Common myeloid progenitor, CD34-positive (primary cell): ENCODE measurements at regions of chr7 and their contacts with region 1.

Region 1: GRCh38 chr7:139127648-139128047 is 18.1 kb upstream of the ZC3HAV1 start:
- DNase-seq: no peak
- H3K4me3 ChIP-seq: no peak overlapping the region
- H3K27ac ChIP-seq: no peak overlapping the region
- H3K4me1 ChIP-seq: peaks cover 0 to 12% (median 5%) of the 10 kb centered on the region in 4 experiments
- H3K27me3 ChIP-seq: no peaks in the 10 kb centered on the region

Region 2: GRCh38 chr7:139016931-139017511 is 110.6 kb before region 1 on chr7:
- CTCF ChIA-PET with region 1: interaction called, 25 read pairs
- POLR2A ChIA-PET with region 1: no interaction called
- DNase-seq: peak; percentile 69 to 79 (median 78)
- H3K4me3 ChIP-seq: no peak overlapping the region
- H3K27ac ChIP-seq: no peak overlapping the region
- H3K4me1 ChIP-seq: no peaks in the 10 kb centered on the region
- H3K27me3 ChIP-seq: peaks cover 0 to 2% (median 0%) of the 10 kb centered on the region in 5 experiments

Region 3: GRCh38 chr7:139095194-139095659 is 32.4 kb before region 1 on chr7:
- CTCF ChIA-PET with region 1: interaction called, 15 read pairs
- POLR2A ChIA-PET with region 1: no interaction called
- DNase-seq: peak; percentile 87 to 97 (median 95)
- H3K4me3 ChIP-seq: peak overlapping the region in 6 of 7 experiments; percentile 24 to 67 (median 52)
- H3K27ac ChIP-seq: peak overlapping the region; percentile 57 to 77
- H3K4me1 ChIP-seq: peaks cover 25 to 74% (median 53%) of the 10 kb centered on the region in 4 experiments
- H3K27me3 ChIP-seq: no peaks in the 10 kb centered on the region

Region 4: GRCh38 chr7:139112741-139113253 is 14.9 kb before region 1 on chr7:
- CTCF ChIA-PET with region 1: interaction called, 14 read pairs
- POLR2A ChIA-PET with region 1: no interaction called
- DNase-seq: no peak
- H3K4me3 ChIP-seq: no peak overlapping the region
- H3K27ac ChIP-seq: no peak overlapping the region
- H3K4me1 ChIP-seq: peaks cover 9 to 18% (median 12%) of the 10 kb centered on the region in 4 experiments
- H3K27me3 ChIP-seq: no peaks in the 10 kb centered on the region